ENCODE measurements at regions of chr6 and their contacts with region 1.

Region 1: GRCh38 chr6:142926494-142927270 is 18.3 kb downstream of the HIVEP2 start:
- DNase-seq: peak; percentile 90
- ATAC-seq: peak; percentile 85
- H3K4me3 Mint-ChIP-seq: peak overlapping the region; percentile 85
- H3K27ac Mint-ChIP-seq: peak overlapping the region; percentile 93
- H3K4me1 Mint-ChIP-seq: peaks cover 44% of the 10 kb centered on the region
- H3K27me3 Mint-ChIP-seq: no peaks in the 10 kb centered on the region

Region 2: GRCh38 chr6:142702501-142703460 is 223.9 kb before region 1 on chr6:
- CTCF ChIA-PET with region 1: no interaction called
- POLR2A ChIA-PET with region 1: no interaction called
- DNase-seq: no peak
- ATAC-seq: no peak
- H3K4me3 Mint-ChIP-seq: no peak overlapping the region
- H3K27ac Mint-ChIP-seq: no peak overlapping the region
- H3K4me1 Mint-ChIP-seq: peaks cover 18% of the 10 kb centered on the region
- H3K27me3 Mint-ChIP-seq: no peaks in the 10 kb centered on the region

Region 3: DNA sequence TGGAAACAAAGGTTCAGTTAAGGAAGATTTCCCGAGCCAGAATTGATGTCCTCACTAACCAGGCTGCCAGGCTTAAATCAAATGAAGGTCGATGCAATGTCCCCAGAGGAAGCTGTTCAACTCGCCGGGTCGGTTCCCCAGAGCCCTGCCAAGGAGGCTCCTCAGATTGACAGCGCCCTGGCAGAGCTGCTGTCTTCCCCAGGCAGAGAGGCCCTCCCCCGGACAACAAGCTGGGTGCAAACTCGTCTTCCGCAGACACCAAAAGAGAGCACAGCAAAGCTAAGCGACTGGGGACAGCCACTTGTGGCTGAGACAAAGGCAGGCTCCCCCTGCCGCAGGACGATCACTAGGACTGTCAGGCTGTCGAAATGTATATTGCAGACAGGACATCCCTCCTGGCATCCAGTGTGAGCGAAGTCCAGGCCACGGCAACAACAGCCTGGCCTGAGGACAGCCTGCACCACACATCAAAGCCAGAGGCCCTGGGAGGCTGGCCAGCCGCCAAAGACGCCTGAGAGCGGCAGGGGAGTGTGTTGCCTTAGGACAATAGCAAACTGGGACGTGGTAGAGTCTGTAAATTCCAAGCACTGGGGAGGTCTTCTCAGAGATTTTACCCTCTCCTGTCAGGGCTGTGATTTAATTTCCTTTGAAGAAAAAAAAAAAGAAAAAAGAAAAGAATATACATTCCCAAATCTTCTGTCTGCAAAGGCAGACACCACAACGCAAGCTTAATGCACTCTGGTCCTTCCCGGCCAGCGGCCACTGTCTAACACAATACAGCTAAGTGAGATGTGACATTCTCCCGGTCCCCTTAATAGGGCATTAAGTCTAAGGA is 80.8 kb before region 1 on chr6:
- CTCF ChIA-PET with region 1: interaction called, 4 read pairs
- POLR2A ChIA-PET with region 1: interaction called, 21 read pairs
- DNase-seq: peak; percentile 79
- ATAC-seq: peak; percentile 57
- H3K4me3 Mint-ChIP-seq: peak overlapping the region; percentile 85
- H3K27ac Mint-ChIP-seq: peak overlapping the region; percentile 95
- H3K4me1 Mint-ChIP-seq: peaks cover 79% of the 10 kb centered on the region
- H3K27me3 Mint-ChIP-seq: no peaks in the 10 kb centered on the region

Region 4: GRCh38 chr6:142885182-142885867 is 41.4 kb before region 1 on chr6:
- CTCF ChIA-PET with region 1: interaction called, 4 read pairs
- POLR2A ChIA-PET with region 1: interaction called, 11 read pairs
- DNase-seq: peak; percentile 58
- ATAC-seq: peak; percentile 83
- H3K4me3 Mint-ChIP-seq: peak overlapping the region; percentile 81
- H3K27ac Mint-ChIP-seq: peak overlapping the region; percentile 95
- H3K4me1 Mint-ChIP-seq: peaks cover 78% of the 10 kb centered on the region
- H3K27me3 Mint-ChIP-seq: no peaks in the 10 kb centered on the region

Region 5: GRCh38 chr6:142913511-142914047 is 13.1 kb before region 1 on chr6:
- CTCF ChIA-PET with region 1: interaction called, 13 read pairs
- POLR2A ChIA-PET with region 1: interaction called, 69 read pairs
- DNase-seq: peak; percentile 86
- ATAC-seq: peak; percentile 95
- H3K4me3 Mint-ChIP-seq: peak overlapping the region; percentile 73
- H3K27ac Mint-ChIP-seq: peak overlapping the region; percentile 98
- H3K4me1 Mint-ChIP-seq: peaks cover 75% of the 10 kb centered on the region
- H3K27me3 Mint-ChIP-seq: no peaks in the 10 kb centered on the region

Measured in activated CD8-positive, alpha-beta T cell treated with anti-CD3 and anti-CD28 coated beads, Interleukin-2, amount 10 ng/mL, durations not matched to agents 7 days and 5 days (primary cell).